Naive thymus-derived CD4-positive, alpha-beta T cell (primary cell): ENCODE measurements at regions of chr6 and their contacts with region 1.

Region 1: DNA sequence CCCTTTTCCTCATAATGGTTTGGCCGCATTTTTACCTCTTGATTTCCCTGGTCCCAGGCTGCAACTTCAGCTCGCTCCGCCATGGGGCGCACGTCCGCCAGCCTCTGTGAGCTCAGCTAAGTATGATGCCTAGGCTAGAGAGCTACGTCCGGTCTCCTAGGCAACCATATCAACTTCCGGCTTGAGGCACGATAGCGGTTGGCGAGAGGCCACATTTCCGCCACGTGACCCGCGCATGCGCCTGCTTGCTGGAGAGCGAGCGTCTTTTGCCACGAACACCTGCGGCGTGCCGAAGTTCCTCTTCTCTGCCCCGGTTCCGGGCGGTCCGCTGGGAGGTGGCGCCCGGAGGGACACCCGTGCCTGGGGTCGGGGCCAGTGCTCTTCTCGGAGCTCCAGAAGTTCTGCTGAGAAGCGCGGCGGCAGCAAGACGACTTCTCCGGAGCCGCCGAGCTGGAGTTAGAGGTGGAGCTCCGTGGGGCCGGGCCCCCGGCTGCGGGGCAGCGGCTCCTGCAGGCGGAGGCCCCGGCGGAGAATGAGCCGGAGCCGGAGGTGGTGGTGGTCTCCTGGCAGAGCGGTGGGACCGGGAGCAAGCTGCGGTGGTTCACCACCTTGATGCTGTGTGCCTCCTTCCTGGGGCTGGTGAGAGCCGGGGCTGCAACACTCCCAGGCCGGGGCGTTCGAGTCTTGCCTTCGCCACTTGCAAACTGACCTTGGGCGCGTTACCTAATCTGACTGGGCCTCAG is 172.0 kb downstream of the SLC16A10 start:
- DNase-seq: peak; percentile 98 to 99 (median 99)
- ATAC-seq: peak; percentile 99
- H3K4me3 ChIP-seq: peak overlapping the region; percentile 89
- H3K4me3 Mint-ChIP-seq: peak overlapping the region; percentile 75 to 90 (median 86)
- H3K27ac ChIP-seq: peak overlapping the region; percentile 87
- H3K27ac Mint-ChIP-seq: peak overlapping the region; percentile 83 to 97 (median 92)
- H3K4me1 ChIP-seq: peaks cover 6 to 17% of the 10 kb centered on the region in 2 donors
- H3K4me1 Mint-ChIP-seq: peaks cover 12 to 37% (median 30%) of the 10 kb centered on the region in 7 donors
- H3K27me3 ChIP-seq: no peaks in the 10 kb centered on the region
- H3K27me3 Mint-ChIP-seq: peaks cover 0 to 18% (median 0%) of the 10 kb centered on the region in 5 donors

Region 2: DNA sequence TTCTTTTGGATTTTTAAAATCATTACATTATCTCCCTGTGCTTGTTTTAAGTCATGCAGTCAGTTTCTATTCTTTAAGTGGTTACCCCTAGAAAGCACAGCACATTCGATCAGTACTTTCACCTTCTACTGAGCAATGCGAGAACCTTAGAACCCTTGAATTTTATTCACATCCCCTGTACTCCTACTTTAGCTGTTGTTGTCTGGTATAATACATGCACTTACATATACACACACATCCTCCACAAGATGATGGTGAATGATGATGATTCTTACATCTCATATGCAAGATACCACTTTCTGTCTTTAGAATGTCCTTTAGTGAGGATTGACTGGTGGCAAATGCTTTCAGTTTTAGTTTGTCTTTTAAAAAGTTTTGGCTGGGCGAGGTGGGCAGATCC is 1073.4 kb before region 1 on chr6:
- CTCF ChIA-PET with region 1: no interaction called
- POLR2A ChIA-PET with region 1: no interaction called
- intact Hi-C with region 1: loop called in 1 of 2 experiments (anchors 2 kb)
- DNase-seq: no peak
- ATAC-seq: no peak
- H3K4me3 ChIP-seq: no peak overlapping the region
- H3K4me3 Mint-ChIP-seq: peak overlapping the region in 9 of 10 donors; percentile 2 to 62 (median 42)
- H3K27ac ChIP-seq: no peak overlapping the region
- H3K27ac Mint-ChIP-seq: peak overlapping the region in 3 of 9 donors; percentile 5 to 27 (median 16)
- H3K4me1 ChIP-seq: peaks cover 19 to 31% of the 10 kb centered on the region in 2 donors
- H3K4me1 Mint-ChIP-seq: peaks cover 0 to 22% (median 16%) of the 10 kb centered on the region in 7 donors
- H3K27me3 ChIP-seq: no peaks in the 10 kb centered on the region
- H3K27me3 Mint-ChIP-seq: no peaks in the 10 kb centered on the region

Region 3: DNA sequence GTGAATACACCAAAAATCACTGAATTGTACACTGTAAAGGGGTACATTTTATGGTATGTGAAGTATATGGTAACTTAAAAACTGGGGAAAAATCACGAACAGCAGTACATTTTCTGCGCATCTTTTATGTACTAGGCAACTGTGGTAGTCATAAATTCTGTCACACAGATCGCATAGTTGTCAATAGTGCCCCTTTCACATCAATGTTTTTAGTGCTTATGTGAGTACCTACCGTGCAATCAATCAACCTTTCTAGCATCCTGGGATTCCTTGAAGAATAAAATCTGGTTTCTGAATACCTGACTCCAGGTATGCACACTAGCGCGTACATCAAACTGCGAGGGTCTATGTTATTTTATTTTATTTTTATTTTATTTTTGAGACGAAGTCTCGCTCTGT is 278.1 kb before region 1 on chr6:
- CTCF ChIA-PET with region 1: interaction called, 4 read pairs
- POLR2A ChIA-PET with region 1: no interaction called
- intact Hi-C with region 1: loop called in 1 of 2 experiments (anchors 1 kb)
- DNase-seq: peak in 1 of 9 donors; percentile 28
- ATAC-seq: no peak
- H3K4me3 ChIP-seq: peak overlapping the region; percentile 81
- H3K4me3 Mint-ChIP-seq: peak overlapping the region; percentile 95 to 99 (median 98)
- H3K27ac ChIP-seq: peak overlapping the region; percentile 92
- H3K27ac Mint-ChIP-seq: peak overlapping the region; percentile 96 to 100 (median 99)
- H3K4me1 ChIP-seq: peaks cover 0 to 11% of the 10 kb centered on the region in 2 donors
- H3K4me1 Mint-ChIP-seq: peaks cover 19 to 46% (median 35%) of the 10 kb centered on the region in 7 donors
- H3K27me3 ChIP-seq: no peaks in the 10 kb centered on the region
- H3K27me3 Mint-ChIP-seq: no peaks in the 10 kb centered on the region

Region 4: DNA sequence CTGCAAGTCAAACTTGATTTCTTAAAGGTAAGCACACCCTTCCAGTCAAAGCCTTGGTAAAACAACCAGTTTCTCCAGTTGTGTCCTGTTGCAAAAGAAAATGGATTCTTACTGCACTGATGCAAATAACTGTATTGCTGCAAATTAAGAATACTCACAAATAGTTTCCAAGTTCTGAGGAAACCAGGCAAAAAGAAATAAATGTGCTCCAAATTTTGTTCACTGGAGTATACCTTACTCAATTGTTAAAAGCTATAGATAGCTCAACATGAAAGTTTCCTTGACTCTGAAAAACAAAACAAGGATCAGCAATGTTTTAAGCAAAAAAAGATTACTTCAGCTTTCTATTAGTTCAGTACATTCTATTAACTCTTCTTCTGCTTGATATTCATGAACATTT is 96.8 kb before region 1 on chr6:
- CTCF ChIA-PET with region 1: no interaction called
- POLR2A ChIA-PET with region 1: no interaction called
- intact Hi-C with region 1: no loop called
- DNase-seq: peak in 3 of 9 donors; percentile 8 to 16 (median 10)
- ATAC-seq: no peak
- H3K4me3 ChIP-seq: no peak overlapping the region
- H3K4me3 Mint-ChIP-seq: no peak overlapping the region
- H3K27ac ChIP-seq: no peak overlapping the region
- H3K27ac Mint-ChIP-seq: no peak overlapping the region
- H3K4me1 ChIP-seq: no peaks in the 10 kb centered on the region
- H3K4me1 Mint-ChIP-seq: peaks cover 0 to 9% (median 4%) of the 10 kb centered on the region in 7 donors
- H3K27me3 ChIP-seq: no peaks in the 10 kb centered on the region
- H3K27me3 Mint-ChIP-seq: no peaks in the 10 kb centered on the region

Region 5: DNA sequence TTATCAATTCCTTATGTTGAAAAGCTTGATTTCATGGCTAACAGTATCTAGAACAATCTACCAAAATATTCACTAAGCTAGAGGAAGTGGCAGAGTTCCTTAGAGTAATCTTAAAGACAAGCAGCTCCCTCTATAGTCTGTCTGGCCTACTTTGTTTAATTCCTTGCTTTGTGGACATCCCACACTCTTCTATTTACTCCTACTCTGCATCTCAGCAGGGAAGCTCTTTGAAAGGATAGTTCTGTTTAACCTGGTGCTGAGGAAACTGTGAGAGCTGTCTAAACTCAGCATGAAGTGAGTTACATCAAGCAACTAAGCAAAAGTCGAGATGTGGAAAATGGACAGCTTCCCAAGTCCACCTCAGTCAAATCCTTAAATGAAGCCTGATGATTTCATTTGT is 219.5 kb after region 1 on chr6:
- CTCF ChIA-PET with region 1: interaction called, 46 read pairs
- POLR2A ChIA-PET with region 1: interaction called, 26 read pairs
- intact Hi-C with region 1: loop called (anchors 1 kb)
- DNase-seq: peak in 7 of 9 donors; percentile 23 to 61 (median 44)
- ATAC-seq: peak; percentile 21
- H3K4me3 ChIP-seq: no peak overlapping the region
- H3K4me3 Mint-ChIP-seq: peak overlapping the region in 1 of 10 donors; percentile 26
- H3K27ac ChIP-seq: peak overlapping the region; percentile 24
- H3K27ac Mint-ChIP-seq: peak overlapping the region in 7 of 9 donors; percentile 31 to 77 (median 62)
- H3K4me1 ChIP-seq: peaks cover 13 to 14% of the 10 kb centered on the region in 2 donors
- H3K4me1 Mint-ChIP-seq: peaks cover 28 to 57% (median 50%) of the 10 kb centered on the region in 7 donors
- H3K27me3 ChIP-seq: no peaks in the 10 kb centered on the region
- H3K27me3 Mint-ChIP-seq: no peaks in the 10 kb centered on the region

Region 6: GRCh38 chr6:111642463-111643158 is 383.4 kb after region 1 on chr6:
- CTCF ChIA-PET with region 1: no interaction called
- POLR2A ChIA-PET with region 1: no interaction called
- intact Hi-C with region 1: loop called (anchors 1 kb)
- DNase-seq: peak in 3 of 9 donors; percentile 11 to 25 (median 16)
- ATAC-seq: peak; percentile 65
- H3K4me3 ChIP-seq: no peak overlapping the region
- H3K4me3 Mint-ChIP-seq: no peak overlapping the region
- H3K27ac ChIP-seq: no peak overlapping the region
- H3K27ac Mint-ChIP-seq: peak overlapping the region in 1 of 9 donors; percentile 55
- H3K4me1 ChIP-seq: no peaks in the 10 kb centered on the region
- H3K4me1 Mint-ChIP-seq: peaks cover 0 to 6% (median 0%) of the 10 kb centered on the region in 7 donors
- H3K27me3 ChIP-seq: no peaks in the 10 kb centered on the region
- H3K27me3 Mint-ChIP-seq: no peaks in the 10 kb centered on the region

Region 7: GRCh38 chr6:111997078-111997852 is 738.0 kb after region 1 on chr6:
- CTCF ChIA-PET with region 1: interaction called, 3 read pairs
- POLR2A ChIA-PET with region 1: no interaction called
- intact Hi-C with region 1: loop called (anchors 1 kb)
- DNase-seq: peak; percentile 60 to 82 (median 75)
- ATAC-seq: peak; percentile 89
- H3K4me3 ChIP-seq: peak overlapping the region; percentile 2
- H3K4me3 Mint-ChIP-seq: peak overlapping the region; percentile 58 to 91 (median 83)
- H3K27ac ChIP-seq: peak overlapping the region; percentile 55
- H3K27ac Mint-ChIP-seq: peak overlapping the region; percentile 44 to 97 (median 93)
- H3K4me1 ChIP-seq: peaks cover 19 to 45% of the 10 kb centered on the region in 2 donors
- H3K4me1 Mint-ChIP-seq: peaks cover 35 to 63% (median 50%) of the 10 kb centered on the region in 7 donors
- H3K27me3 ChIP-seq: no peaks in the 10 kb centered on the region
- H3K27me3 Mint-ChIP-seq: no peaks in the 10 kb centered on the region

Region 8: DNA sequence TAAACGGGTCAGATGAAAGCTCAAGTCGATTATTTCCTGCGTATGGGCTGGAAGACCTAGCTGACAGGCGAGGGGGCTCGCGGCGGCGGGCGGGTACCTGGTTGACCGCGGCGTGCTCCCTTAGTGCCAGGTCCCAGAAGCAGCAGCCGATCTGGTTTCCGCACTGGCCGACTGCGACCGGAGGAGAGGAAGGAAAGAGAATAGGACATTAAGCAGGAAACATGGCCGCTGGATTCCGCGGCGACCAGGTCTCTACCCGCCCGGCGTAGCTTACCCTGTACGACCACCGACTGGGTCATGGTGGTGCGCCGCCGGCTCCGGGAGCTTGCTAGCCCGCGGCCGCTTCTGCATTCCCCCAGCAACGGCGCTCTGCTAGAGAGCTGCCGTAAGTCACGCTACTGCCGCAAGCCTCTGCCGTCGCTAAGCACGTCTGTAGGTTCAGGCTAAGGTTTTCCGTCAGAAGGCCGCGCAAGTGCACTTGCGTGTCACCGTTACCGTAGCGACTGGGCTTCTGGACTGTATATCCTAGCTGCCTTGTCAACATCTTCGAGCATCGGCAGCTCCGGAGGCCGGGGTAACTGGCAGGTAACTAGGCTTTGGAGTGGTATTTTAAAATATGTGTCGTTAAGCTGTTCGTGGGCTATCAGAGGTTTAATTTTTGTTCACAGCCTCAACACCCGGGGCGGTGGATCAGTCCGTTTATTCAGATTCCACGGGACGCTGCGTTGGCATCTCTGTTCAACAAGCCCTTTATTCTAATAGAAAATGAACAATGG is 828.1 kb after region 1 on chr6 and contains the starts of genes FAM229B and TUBE1:
- CTCF ChIA-PET with region 1: no interaction called
- POLR2A ChIA-PET with region 1: interaction called, 5 read pairs
- intact Hi-C with region 1: loop called (anchors 1 kb)
- DNase-seq: peak; percentile 70 to 96 (median 90)
- ATAC-seq: peak; percentile 98
- H3K4me3 ChIP-seq: peak within 1 kb of the TSS; percentile 64
- H3K4me3 Mint-ChIP-seq: no peak within 1 kb of the TSS
- H3K27ac ChIP-seq: peak within 1 kb of the TSS; percentile 87
- H3K27ac Mint-ChIP-seq: peak within 1 kb of the TSS in 1 of 9 donors; percentile 65
- H3K4me1 ChIP-seq: peaks cover 0 to 7% of the 10 kb centered on the region in 2 donors
- H3K4me1 Mint-ChIP-seq: peaks cover 0 to 18% (median 10%) of the 10 kb centered on the region in 7 donors
- H3K27me3 ChIP-seq: peaks cover 0 to 3% of the 10 kb centered on the region in 2 donors
- H3K27me3 Mint-ChIP-seq: peaks cover 0 to 37% (median 6%) of the 10 kb centered on the region in 5 donors
- total RNA-seq, gene FAM229B: 0.70 to 5.8 (median 2.0) TPM
- total RNA-seq, gene TUBE1: 19.3 to 50.0 (median 35.1) TPM